Activated T-helper 2 cell treated with anti-CD3 and anti-CD28 coated beads, Interferon-gamma antibody, Interleukin-2, Interleukin-4, amounts not matched to agents 10 μg/mL and 5 μg/mL and 100 μg/mL, durations not matched to agents 14 hours and 24 hours and 36 hours (primary cell): ENCODE measurements at regions of chr13 and their contacts with region 1.

Region 1: DNA sequence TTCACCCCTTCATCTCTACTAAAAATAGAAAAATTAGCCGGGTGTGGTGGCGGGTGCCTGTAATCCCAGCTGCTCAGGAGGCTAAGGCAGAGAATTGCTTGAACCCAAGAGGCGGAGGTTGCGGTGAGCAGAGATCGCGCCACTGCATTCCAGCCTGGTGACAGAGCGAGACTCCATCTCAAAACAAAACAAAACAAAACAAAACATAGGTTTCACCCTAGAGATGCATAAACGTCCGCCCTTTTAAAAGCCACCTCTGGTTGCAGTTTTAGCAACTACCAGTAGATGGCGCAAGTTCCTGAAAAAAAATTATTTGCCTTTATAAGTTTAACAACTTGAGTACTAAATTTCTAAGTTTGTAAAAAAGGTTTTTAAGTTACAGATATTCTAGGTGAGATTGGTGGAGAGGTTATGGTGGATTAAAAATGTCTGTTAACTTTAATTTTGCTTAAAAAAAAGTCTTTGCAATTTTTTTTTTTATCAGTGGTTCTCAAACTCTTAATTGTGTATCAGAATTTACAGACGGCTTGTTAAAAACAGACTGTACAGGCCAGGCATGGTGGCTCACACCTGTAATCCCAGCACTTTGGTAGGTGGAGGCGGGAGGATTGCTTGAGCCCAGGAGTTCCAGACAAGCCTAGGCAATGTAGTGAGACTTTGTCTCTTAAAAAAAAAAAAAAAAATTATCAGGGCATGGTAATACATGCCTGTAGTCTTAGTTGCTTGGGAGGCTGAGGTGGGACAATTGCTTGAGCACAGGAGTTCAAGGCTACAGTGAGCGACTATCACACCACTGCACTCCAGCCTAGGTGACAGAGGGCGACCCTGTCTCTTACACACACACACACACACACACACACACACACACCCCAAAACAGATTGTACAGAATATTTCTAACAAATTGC is 42.1 kb downstream of the NAA16 start:
- DNase-seq: peak; percentile 53
- H3K4me3 Mint-ChIP-seq: no peak overlapping the region
- H3K27ac Mint-ChIP-seq: peak overlapping the region; percentile 64
- H3K4me1 Mint-ChIP-seq: peaks cover 40% of the 10 kb centered on the region
- H3K27me3 Mint-ChIP-seq: no peaks in the 10 kb centered on the region

Region 2: GRCh38 chr13:41402681-41403511 is 49.7 kb after region 1 on chr13:
- intact Hi-C with region 1: loop called (anchors 5 kb)
- DNase-seq: no peak
- H3K4me3 Mint-ChIP-seq: no peak overlapping the region
- H3K27ac Mint-ChIP-seq: no peak overlapping the region
- H3K4me1 Mint-ChIP-seq: no peaks in the 10 kb centered on the region
- H3K27me3 Mint-ChIP-seq: peaks cover 11% of the 10 kb centered on the region

Region 3: DNA sequence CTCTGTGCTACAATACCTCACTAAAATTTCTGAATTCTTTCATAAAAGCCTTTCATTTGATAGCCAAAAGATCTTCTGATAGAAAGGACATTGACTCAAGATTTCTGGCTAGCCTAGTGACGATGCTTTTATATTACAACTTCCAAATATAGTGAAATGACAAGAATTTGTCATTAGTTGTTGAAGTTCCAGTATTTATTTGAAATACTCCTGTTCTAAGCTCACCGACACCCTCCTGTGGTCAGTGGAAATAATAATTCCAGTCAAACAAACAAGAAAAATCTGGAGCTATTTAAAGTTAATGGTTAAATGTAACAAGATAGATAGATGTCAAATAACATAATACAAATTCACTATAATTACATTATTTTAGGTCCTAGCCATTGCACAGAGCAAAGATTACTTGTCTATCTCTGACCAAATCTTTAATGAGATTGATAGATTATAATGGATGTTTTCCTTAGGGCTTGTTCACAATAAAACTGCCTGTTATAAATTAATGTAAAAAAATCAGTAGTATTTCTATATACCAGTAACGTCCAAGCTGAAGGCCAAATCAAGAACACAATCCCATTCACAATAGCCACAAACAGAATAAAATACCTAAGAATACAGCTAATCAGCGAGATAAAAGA is 299.7 kb after region 1 on chr13:
- intact Hi-C with region 1: loop called (anchors 5 kb)
- DNase-seq: no peak
- H3K4me3 Mint-ChIP-seq: no peak overlapping the region
- H3K27ac Mint-ChIP-seq: no peak overlapping the region
- H3K4me1 Mint-ChIP-seq: peaks cover 6% of the 10 kb centered on the region
- H3K27me3 Mint-ChIP-seq: no peaks in the 10 kb centered on the region

Region 4: DNA sequence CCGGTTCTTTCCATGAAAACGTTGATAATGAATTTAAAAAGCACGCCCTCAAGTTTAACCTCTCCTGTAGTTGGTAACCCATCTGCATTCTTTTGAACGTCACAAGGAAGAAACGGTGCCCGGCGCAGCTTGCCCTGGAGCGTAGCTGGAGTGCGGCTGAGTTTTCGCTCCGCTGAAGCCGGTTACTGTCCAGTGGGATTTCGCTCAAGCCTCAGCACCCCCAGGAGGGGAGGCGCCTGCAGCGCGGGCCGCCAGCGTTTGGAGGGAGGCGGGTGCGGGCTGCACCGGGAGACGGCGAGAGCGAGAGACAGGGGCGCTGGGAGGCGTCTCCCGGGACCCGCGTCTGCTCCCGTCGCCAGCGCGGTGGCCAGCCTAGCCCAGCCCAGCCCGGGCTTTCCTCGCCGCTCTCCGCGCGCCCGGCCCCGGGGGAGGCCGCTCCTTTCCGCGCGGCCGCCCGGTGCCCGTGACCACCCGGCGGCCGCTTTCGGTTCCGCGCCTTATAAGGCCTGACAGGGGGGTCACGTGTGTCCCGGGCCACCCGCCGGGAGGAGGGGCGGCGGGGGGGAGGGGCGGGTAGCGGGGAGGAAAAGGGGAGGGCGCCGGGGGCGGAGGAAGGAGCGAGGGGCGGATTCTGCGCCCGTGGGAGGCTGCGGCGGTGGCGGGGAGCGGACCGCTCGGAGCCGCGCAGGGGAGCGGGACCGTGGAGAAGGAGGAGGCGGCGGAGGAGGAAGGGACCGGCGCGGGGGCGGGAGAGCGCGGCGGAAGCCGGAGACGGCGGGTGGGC is 687.0 kb after region 1 on chr13:
- intact Hi-C with region 1: loop called (anchors 10 kb)
- DNase-seq: peak; percentile 80
- H3K4me3 Mint-ChIP-seq: peak overlapping the region; percentile 84
- H3K27ac Mint-ChIP-seq: peak overlapping the region; percentile 67
- H3K4me1 Mint-ChIP-seq: peaks cover 17% of the 10 kb centered on the region
- H3K27me3 Mint-ChIP-seq: peaks cover 38% of the 10 kb centered on the region